ENCODE measurements at regions of chr19 and their contacts with region 1.

Region 1: DNA sequence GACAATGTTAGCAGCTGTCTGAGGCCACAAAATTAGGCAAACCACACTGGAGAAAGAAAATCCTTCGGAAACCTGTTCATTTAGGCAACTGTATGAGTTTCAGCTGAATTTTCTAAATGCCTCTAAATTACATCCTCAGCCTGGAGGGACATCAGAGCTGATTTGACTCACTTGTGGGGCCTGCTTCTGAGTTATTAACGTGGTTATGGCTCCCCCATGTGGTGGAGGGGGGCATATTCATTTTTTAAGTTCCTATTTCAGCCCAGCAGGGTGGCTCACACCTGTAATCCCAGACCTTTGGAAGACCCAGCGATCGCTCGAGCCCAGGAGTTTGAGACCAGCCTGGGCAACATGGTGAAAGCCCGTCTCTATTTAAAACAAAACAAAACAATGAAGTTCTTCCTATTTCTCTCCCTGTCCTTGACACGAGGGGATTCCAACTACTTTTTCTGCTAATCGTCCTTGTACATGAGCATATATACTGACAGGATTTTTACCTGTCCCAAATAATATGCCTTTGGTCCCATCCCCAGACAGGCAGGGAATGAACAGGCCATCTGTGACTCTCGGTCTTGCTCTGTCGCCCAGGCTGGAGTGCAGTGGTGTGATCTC is 31.5 kb upstream of the HIF3A start:
- DNase-seq: peak; percentile 73
- CTCF ChIP-seq: peak; percentile 87

Region 2: GRCh38 chr19:46021531-46022041 is 243.7 kb before region 1 on chr19:
- in situ Hi-C with region 1: loop called (anchors 10 kb)
- DNase-seq: no peak
- CTCF ChIP-seq: no peak

Region 3: DNA sequence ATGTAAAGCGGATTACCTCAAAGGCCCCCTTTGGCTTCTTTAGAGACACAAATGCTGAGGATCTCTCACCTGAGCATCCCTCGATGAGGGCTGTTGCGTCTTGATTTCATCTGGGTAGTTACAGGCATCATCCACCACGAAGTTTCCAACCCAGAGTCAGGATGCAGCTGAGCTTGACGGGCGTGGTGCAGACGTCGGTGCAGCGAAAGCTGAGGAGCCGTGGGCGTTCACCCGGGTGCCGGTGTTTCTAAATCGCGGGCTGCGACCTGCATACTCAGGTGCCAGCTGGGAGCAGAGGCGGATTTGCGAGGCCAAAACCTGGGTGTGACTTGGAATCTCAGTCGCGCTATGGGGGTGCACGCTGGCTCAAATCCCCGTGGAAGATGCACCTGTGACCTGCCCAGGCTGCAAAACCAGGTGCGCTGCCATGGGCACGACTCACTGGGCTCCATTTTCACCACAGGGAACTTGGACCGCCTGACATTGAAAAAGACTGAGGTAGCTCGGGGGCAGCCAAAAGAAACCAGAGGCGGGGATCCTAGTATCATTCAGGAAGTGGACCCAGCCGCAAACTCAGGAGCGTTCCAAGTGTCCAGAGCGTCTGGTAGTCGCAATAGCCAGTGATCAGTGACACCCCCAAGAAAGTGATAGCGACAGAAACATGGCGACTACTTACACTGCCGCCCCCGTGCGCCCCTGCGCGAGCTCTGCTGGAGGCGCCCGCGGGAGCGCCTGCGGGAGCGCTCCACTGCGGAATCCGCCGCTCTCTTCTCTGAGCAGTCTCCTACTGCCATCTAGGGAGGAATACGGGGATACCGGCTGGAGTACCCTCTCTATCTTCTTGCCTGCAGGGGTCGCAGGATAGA is 188.1 kb before region 1 on chr19:
- in situ Hi-C with region 1: loop called (anchors 25 kb)
- DNase-seq: peak; percentile 75
- CTCF ChIP-seq: peak; percentile 49